SK-N-SH (cell line): ENCODE measurements at regions of chr10 and their contacts with region 1.

Region 1: GRCh38 chr10:101495324-101495925 is 92.6 kb downstream of the POLL start:
- DNase-seq: peak; percentile 43
- H3K4me3 ChIP-seq: no peak overlapping the region
- H3K27ac ChIP-seq: no peak overlapping the region
- H3K4me1 ChIP-seq: peaks cover 0 to 9% of the 10 kb centered on the region in 2 experiments; a peak in 2 of 4 replicates
- H3K27me3 ChIP-seq: no peaks in the 10 kb centered on the region
- CTCF ChIP-seq: peak; percentile 41
- EP300 ChIP-seq: no peak
- RAD21 ChIP-seq: peak; percentile 78

Region 2: GRCh38 chr10:101506829-101507661 is 11.6 kb after region 1 on chr10:
- CTCF ChIA-PET with region 1: interaction called, 17 read pairs
- POLR2A ChIA-PET with region 1: no interaction called
- DNase-seq: no peak
- H3K4me3 ChIP-seq: no peak overlapping the region
- H3K27ac ChIP-seq: no peak overlapping the region
- H3K4me1 ChIP-seq: peaks cover 0 to 4% of the 10 kb centered on the region in 2 experiments; a peak in 2 of 4 replicates
- H3K27me3 ChIP-seq: no peaks in the 10 kb centered on the region
- CTCF ChIP-seq: no peak
- EP300 ChIP-seq: no peak
- RAD21 ChIP-seq: no peak